ENCODE measurements at regions of chr1 and their contacts with region 1.

Region 1: DNA sequence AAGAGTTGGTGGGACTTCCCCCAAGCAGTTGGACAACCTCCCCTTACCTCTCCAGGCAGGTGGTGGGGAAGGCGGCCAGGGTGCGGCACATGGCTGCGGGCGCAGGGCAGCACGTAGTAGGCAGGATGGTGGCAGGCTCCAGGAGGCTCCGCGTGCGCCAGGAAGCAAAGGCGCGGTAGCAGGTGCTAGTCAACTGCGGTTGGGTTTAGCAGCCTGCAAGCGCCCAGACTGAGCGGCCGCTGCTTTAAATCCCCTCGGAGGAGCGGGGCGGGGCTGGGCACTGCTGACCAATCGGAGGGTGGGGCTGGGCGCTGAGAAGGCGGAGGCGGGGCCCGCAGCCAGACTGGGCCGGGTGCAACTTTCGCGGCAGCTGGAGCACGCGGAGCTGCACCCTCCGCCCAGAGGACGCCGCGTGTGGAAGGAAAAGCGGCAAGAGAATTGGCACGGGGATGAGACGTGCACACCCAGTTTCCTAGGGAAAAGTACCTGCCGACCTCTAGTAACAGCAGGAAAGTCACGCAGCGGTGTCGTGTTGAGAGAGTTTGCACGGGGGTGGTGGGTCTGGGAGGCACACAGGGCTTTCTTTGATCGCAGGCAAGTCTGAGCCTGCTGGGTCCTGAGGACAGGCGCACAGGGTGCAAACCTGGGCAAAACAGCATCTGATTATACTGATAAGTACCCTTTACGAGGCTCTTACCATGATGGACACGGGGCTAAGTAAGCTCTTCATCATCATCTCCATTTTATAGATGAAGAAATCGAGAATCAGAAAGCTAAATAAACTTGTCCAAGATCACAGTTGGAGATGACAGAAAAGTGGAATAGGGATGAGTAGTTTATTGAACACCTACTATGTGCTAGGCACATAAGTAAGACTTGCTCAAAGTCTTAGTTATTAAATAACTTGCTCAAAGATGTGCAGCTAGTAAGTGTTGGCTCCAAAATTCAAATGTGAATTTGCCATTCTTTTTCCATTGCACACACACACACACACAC is at the start of gene RGS16:
- DNase-seq: peak; percentile 96
- H3K4me3 ChIP-seq: peak within 1 kb of the TSS; percentile 39 to 54 (median 50)
- H3K27ac ChIP-seq: peak within 1 kb of the TSS; percentile 50 to 68 (median 62)
- H3K4me1 ChIP-seq: peaks cover 0 to 27% (median 23%) of the 10 kb centered on the region in 4 donors
- H3K27me3 ChIP-seq: no peaks in the 10 kb centered on the region
- CTCF ChIP-seq: no peak
- EP300 ChIP-seq: no peak
- POLR2A ChIP-seq: peak; percentile 50 to 54
- total RNA-seq, gene RGS16: 0.83 to 12.4 (median 2.6) TPM

Region 2: DNA sequence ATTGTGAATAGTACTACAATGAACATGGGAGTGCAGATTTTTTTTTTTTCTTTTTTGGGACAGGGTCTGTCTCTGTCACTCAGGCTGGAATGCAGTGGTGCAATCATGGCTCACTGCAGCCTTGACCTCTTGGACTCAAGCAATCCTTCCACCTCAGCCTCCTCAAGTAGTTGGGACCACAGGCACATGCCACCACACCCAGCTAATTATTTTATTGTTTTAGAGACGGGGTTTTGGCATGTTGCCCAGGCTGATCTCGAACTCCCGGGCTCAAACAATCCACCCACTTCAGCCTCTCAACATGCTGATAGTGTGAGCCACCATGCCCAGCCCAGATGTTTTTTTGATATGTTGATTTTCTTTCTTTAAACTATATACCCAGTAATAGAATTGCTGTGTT is 96.8 kb before region 1 on chr1:
- intact Hi-C with region 1: no loop called
- DNase-seq: no peak
- H3K4me3 ChIP-seq: no peak overlapping the region
- H3K27ac ChIP-seq: no peak overlapping the region
- H3K4me1 ChIP-seq: no peaks in the 10 kb centered on the region
- H3K27me3 ChIP-seq: no peaks in the 10 kb centered on the region
- CTCF ChIP-seq: no peak
- EP300 ChIP-seq: no peak
- POLR2A ChIP-seq: no peak

Region 3: DNA sequence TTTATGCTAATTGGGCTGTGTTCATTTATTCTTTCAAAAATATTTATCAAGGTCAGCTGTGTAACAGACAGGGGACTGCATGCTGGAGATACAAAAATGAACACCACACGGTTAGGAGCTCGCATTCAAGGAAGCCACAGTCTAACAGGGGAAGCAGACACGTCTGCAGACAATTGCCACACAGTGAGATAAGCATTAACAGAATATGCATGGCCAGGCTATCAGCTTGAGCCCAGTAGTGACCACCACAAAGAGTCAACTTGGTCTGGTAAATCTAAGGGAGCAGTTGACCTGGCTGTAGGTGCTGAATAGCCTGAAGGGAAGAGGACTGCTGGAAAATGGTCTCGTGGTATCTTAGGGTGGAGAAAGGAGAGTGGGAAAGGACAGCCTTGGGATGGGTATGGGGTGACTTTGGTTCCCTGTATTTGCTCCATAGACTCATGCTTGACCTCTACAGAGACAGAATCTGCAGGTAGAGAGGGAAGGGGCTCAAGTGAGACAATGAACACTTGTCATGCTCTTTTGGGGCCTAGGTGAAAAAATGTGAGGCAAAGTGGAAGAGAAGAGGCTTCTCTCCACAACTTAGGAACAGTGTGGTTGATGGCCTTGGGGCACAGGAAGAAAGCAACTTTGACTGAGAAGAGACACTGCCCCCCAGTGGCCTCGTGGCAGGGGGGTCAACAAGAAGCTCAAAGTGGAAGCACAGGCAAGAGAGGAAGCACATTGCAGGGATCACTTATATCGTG is 177.5 kb after region 1 on chr1:
- intact Hi-C with region 1: loop called (anchors 1 kb)
- DNase-seq: peak; percentile 86
- H3K4me3 ChIP-seq: no peak overlapping the region
- H3K27ac ChIP-seq: no peak overlapping the region
- H3K4me1 ChIP-seq: no peaks in the 10 kb centered on the region
- H3K27me3 ChIP-seq: no peaks in the 10 kb centered on the region
- CTCF ChIP-seq: peak in 3 of 4 experiments; percentile 27 to 50 (median 41)
- EP300 ChIP-seq: no peak
- POLR2A ChIP-seq: no peak

Region 4: GRCh38 chr1:182839209-182840065 is 235.0 kb after region 1 on chr1 and contains the start of gene DHX9:
- intact Hi-C with region 1: loop called (anchors 5 kb)
- DNase-seq: peak; percentile 97
- H3K4me3 ChIP-seq: peak within 1 kb of the TSS; percentile 65 to 90 (median 81)
- H3K27ac ChIP-seq: peak within 1 kb of the TSS; percentile 92 to 96 (median 92)
- H3K4me1 ChIP-seq: peaks cover 0 to 40% (median 36%) of the 10 kb centered on the region in 4 donors
- H3K27me3 ChIP-seq: no peaks in the 10 kb centered on the region
- CTCF ChIP-seq: no peak
- EP300 ChIP-seq: no peak
- POLR2A ChIP-seq: peak; percentile 85 to 86
- total RNA-seq, gene DHX9: 66.4 to 75.4 (median 69.0) TPM

Measured in sigmoid colon (tissue), 7 donors.